ENCODE measurements at regions of chr11 and their contacts with region 1.

Region 1: GRCh38 chr11:62306227-62306626 is 7.4 kb upstream of the SCGB1D4 start:
- DNase-seq: no peak
- ATAC-seq: no peak
- H3K4me3 ChIP-seq: no peak overlapping the region
- H3K27ac ChIP-seq: no peak overlapping the region
- H3K4me1 ChIP-seq: no peaks in the 10 kb centered on the region
- H3K27me3 ChIP-seq: peaks cover 0 to 21% (median 3%) of the 10 kb centered on the region in 3 donors
- CTCF ChIP-seq: no peak

Region 2: GRCh38 chr11:62169935-62170548 is 136.2 kb before region 1 on chr11:
- intact Hi-C with region 1: loop called (anchors 2 to 5 kb)
- DNase-seq: no peak
- ATAC-seq: peak; percentile 25 to 75 (median 58)
- H3K4me3 ChIP-seq: no peak overlapping the region
- H3K27ac ChIP-seq: no peak overlapping the region
- H3K4me1 ChIP-seq: peaks cover 10% of the 10 kb centered on the region
- H3K27me3 ChIP-seq: peaks cover 1 to 27% (median 4%) of the 10 kb centered on the region in 3 donors
- CTCF ChIP-seq: no peak

Region 3: DNA sequence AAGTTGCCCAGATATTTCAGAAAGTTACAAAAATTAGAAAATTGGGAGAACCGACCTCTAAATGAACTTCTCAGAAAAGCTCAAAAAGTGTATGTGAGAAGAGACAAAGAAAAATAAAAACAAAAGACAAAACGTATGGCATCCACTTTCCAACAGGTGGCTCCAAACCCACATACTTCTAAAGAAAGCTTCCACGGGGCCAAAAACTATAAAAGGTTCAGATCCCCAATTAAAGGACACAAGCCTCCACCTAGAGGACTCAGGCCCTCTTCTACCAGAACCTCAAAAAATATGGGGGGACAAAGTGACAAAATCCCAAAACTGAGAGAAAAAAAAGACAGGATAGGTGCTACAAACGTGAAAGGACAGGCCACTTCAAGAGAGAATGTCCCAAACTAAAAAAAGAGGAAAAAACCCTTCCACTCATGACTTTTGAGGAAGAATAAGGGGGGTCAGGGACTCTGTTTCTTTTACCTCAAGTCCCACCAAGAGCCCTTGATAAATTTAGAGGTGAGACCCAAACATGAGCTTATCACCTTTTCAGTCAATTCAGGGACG is 89.0 kb before region 1 on chr11:
- intact Hi-C with region 1: loop called in 1 of 2 experiments (anchors 5 kb)
- DNase-seq: no peak
- ATAC-seq: no peak
- H3K4me3 ChIP-seq: no peak overlapping the region
- H3K27ac ChIP-seq: no peak overlapping the region
- H3K4me1 ChIP-seq: no peaks in the 10 kb centered on the region
- H3K27me3 ChIP-seq: no peaks in the 10 kb centered on the region
- CTCF ChIP-seq: peak; percentile 15

Region 4: GRCh38 chr11:62233730-62234129 is 72.5 kb before region 1 on chr11:
- intact Hi-C with region 1: loop called (anchors 5 kb)
- DNase-seq: no peak
- ATAC-seq: no peak
- H3K4me3 ChIP-seq: no peak overlapping the region
- H3K27ac ChIP-seq: no peak overlapping the region
- H3K4me1 ChIP-seq: no peaks in the 10 kb centered on the region
- H3K27me3 ChIP-seq: peaks cover 0 to 12% (median 2%) of the 10 kb centered on the region in 3 donors
- CTCF ChIP-seq: peak; percentile 8

Measured in psoas muscle (tissue), 8 donors.